Common myeloid progenitor, CD34-positive (primary cell): ENCODE measurements at regions of chr7 and their contacts with region 1.

Region 1: GRCh38 chr7:116236020-116236630 is 25.8 kb downstream of the TES start:
- DNase-seq: peak; percentile 66 to 83 (median 75)
- H3K4me3 ChIP-seq: no peak overlapping the region
- H3K27ac ChIP-seq: no peak overlapping the region
- H3K4me1 ChIP-seq: peaks cover 9 to 32% (median 16%) of the 10 kb centered on the region in 4 experiments
- H3K27me3 ChIP-seq: no peaks in the 10 kb centered on the region

Region 2: DNA sequence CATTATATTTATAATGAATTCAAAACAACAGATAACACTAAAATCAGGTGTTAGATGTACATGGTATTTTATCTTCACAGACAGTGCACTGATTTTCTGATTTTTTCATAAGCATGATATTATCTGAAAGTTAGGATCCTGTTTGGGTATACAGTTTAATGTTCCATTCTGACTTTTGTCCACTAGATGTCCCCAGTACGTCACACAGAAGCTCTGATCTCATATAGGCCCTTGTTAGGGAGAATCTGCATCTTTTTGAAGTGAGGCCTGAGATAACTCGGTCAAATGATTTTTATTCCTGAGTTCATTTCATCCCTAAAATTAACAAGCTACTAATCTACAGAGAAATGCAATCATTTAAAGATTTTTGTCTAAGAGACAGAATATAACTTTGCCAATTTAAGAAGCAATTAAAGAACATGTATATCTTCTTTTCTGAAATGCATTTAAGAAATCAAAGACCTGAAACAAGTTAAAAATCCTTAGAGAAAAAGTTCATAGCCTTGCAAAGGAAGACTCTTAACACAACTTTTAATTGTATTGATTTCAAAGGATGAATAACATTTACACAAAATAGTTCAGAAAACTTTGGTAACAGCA is 97.8 kb before region 1 on chr7:
- CTCF ChIA-PET with region 1: interaction called, 12 read pairs
- POLR2A ChIA-PET with region 1: no interaction called
- DNase-seq: peak; percentile 65 to 78 (median 73)
- H3K4me3 ChIP-seq: no peak overlapping the region
- H3K27ac ChIP-seq: no peak overlapping the region
- H3K4me1 ChIP-seq: peaks cover 0 to 12% (median 0%) of the 10 kb centered on the region in 4 experiments
- H3K27me3 ChIP-seq: no peaks in the 10 kb centered on the region

Region 3: DNA sequence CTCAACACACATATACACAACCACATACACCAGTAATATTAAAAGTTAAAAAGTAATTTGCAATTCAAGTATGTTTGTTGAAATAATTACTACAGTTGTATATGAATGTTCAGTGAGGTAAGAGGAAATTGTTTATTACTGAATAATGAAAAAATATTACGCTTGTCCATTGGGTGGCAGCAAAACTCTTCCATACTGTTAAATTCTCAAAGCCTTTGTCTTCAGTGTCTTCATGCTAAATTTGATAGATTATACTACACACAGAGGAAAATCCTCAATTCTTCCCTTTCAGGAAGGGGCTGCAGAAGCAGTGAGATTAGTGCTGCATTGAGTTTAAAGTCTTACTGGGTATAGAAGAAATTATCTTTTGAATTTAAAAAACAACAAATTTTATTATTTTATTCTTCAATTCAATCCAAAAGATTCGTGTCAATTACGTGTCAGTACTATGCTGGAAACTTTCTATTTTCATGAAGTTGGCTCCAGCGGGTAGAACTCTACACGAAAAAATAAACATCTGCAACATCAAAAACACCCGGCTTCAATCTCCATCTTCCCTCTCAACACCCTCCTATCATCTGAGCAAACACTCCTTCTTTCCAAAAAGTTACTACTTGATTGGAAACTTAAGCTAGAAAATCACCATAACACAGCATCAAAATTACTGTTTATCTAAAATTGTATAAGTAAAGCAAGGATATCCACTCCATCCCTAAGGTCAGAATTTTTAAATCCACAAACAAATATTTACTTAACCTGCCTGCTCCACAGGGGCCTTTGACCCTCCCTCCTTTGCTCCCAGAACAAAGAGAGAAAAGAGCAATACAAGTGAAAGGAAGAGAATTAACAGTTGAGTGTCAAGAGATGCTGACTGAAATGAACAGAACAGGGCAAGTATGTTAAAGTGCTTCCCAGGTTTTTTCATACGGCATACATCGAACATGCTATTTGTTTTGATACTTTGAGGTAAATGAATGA is 62.8 kb before region 1 on chr7:
- CTCF ChIA-PET with region 1: interaction called, 292 read pairs
- POLR2A ChIA-PET with region 1: no interaction called
- DNase-seq: peak; percentile 64 to 87 (median 78)
- H3K4me3 ChIP-seq: no peak overlapping the region
- H3K27ac ChIP-seq: no peak overlapping the region
- H3K4me1 ChIP-seq: peaks cover 0 to 2% (median 0%) of the 10 kb centered on the region in 4 experiments
- H3K27me3 ChIP-seq: no peaks in the 10 kb centered on the region

Region 4: DNA sequence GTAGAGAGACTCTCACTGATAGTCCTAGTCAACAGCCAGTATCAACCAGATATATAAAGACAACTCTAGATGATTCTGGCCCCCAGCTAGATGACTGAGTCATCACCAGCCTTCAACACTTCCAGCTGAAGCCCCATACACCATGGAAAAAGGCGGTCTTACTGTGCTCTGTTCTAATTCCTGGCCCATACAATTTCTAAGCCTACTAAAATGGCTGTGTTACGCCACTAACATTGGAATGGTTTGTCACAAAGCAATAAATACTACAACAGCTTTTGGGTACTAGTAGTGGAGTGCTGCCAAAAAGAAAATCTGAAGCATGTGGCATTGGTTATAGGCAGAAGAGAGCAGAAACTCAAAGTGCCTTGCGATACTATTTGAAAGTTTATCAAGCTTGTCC is 38.8 kb before region 1 on chr7:
- CTCF ChIA-PET with region 1: interaction called, 15 read pairs
- POLR2A ChIA-PET with region 1: no interaction called
- DNase-seq: no peak
- H3K4me3 ChIP-seq: no peak overlapping the region
- H3K27ac ChIP-seq: no peak overlapping the region
- H3K4me1 ChIP-seq: no peaks in the 10 kb centered on the region
- H3K27me3 ChIP-seq: no peaks in the 10 kb centered on the region

Region 5: GRCh38 chr7:116218051-116218645 is 18.0 kb before region 1 on chr7:
- CTCF ChIA-PET with region 1: interaction called, 21 read pairs
- POLR2A ChIA-PET with region 1: no interaction called
- DNase-seq: peak in 2 of 3 donors; percentile 44 to 56
- H3K4me3 ChIP-seq: peak overlapping the region in 1 of 7 experiments; percentile 11
- H3K27ac ChIP-seq: no peak overlapping the region
- H3K4me1 ChIP-seq: peaks cover 36 to 57% (median 52%) of the 10 kb centered on the region in 4 experiments
- H3K27me3 ChIP-seq: no peaks in the 10 kb centered on the region

Region 6: GRCh38 chr7:116271963-116272839 is 36.1 kb after region 1 on chr7:
- CTCF ChIA-PET with region 1: no interaction called
- POLR2A ChIA-PET with region 1: no interaction called
- DNase-seq: peak in 2 of 3 donors; percentile 25 to 26
- H3K4me3 ChIP-seq: no peak overlapping the region
- H3K27ac ChIP-seq: no peak overlapping the region
- H3K4me1 ChIP-seq: no peaks in the 10 kb centered on the region
- H3K27me3 ChIP-seq: no peaks in the 10 kb centered on the region